ENCODE measurements at regions of chr2 and their contacts with region 1.

Region 1: GRCh38 chr2:145829931-145830330 is 1310.0 kb upstream of the ZEB2 start:
- DNase-seq: no peak
- ATAC-seq: no peak
- H3K4me3 ChIP-seq: no peak overlapping the region
- H3K27ac ChIP-seq: no peak overlapping the region
- H3K4me1 ChIP-seq: no peaks in the 10 kb centered on the region
- H3K27me3 ChIP-seq: no peaks in the 10 kb centered on the region
- CTCF ChIP-seq: no peak
- POLR2A ChIP-seq: no peak
- RAD21 ChIP-seq: no peak

Region 2: DNA sequence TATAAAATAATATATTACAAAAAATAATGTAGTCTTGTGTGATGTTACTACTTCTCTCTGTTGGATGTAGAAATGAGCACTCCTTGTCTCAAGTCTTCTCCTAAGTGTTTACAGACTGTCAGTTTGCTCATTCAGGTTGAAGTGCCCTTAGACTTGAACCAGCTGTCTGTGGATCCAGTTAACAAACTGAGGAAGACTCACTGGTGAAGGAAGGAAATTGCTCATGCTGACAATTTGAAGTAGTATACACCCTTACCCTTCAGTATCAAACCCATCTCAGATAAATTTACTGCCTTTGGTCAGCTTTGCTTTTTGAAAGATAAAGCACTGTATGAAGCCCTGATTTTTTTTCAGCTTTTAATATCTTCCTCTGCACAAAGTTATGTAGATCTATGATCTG is 455.8 kb before region 1 on chr2:
- CTCF ChIA-PET with region 1: no interaction called
- POLR2A ChIA-PET with region 1: no interaction called
- dilution Hi-C with region 1: no loop called
- in situ Hi-C with region 1: no loop called
- intact Hi-C with region 1: no loop called
- DNase-seq: no peak
- ATAC-seq: no peak
- H3K4me3 ChIP-seq: no peak overlapping the region
- H3K27ac ChIP-seq: no peak overlapping the region
- H3K4me1 ChIP-seq: no peaks in the 10 kb centered on the region
- H3K27me3 ChIP-seq: no peaks in the 10 kb centered on the region
- CTCF ChIP-seq: no peak
- POLR2A ChIP-seq: no peak
- RAD21 ChIP-seq: no peak

Region 3: DNA sequence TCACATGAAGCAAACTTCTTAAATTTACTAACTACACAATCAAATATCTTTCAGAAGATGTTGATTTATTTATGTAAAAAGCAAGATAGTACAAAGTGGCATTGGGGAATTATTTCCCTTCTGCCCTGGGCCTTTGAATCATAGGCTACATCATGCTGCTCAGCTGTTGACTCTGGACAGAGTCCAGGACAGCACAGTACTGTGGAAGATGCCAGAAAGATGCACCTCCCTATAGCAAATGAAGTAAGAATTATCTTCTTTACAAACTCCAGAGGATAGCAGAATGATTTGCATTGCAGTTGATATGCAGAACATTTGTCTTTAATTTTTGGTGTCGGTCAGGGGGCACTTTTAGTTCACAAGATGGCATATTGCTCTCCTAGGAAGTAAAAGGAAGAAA is 44.5 kb after region 1 on chr2:
- CTCF ChIA-PET with region 1: no interaction called
- POLR2A ChIA-PET with region 1: no interaction called
- dilution Hi-C with region 1: no loop called
- in situ Hi-C with region 1: no loop called
- intact Hi-C with region 1: loop called (anchors 5 kb)
- DNase-seq: peak; percentile 64
- ATAC-seq: peak; percentile 71
- H3K4me3 ChIP-seq: no peak overlapping the region
- H3K27ac ChIP-seq: no peak overlapping the region
- H3K4me1 ChIP-seq: no peaks in the 10 kb centered on the region
- H3K27me3 ChIP-seq: no peaks in the 10 kb centered on the region
- CTCF ChIP-seq: no peak
- POLR2A ChIP-seq: no peak
- RAD21 ChIP-seq: no peak

Region 4: DNA sequence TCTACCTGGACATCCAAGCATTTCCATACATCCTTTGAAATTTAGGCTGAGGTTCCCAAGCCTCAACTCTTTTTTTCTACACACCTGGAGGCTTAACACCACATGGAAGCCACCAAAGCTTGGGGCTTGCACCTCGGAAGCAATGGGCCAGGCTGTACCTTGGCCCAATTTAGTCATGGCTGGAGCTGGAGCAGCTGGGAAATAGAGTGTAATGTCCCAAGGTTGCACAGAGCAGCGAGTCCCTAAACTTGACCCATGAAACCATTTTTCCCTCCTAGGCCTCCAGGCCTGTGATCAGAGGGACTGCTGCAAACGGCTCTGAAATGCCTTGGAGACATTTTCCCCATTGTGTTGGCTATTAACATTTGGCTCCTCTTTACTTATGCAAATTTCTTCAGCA is 264.3 kb after region 1 on chr2:
- CTCF ChIA-PET with region 1: no interaction called
- POLR2A ChIA-PET with region 1: no interaction called
- dilution Hi-C with region 1: no loop called
- in situ Hi-C with region 1: no loop called
- intact Hi-C with region 1: no loop called
- DNase-seq: no peak
- ATAC-seq: no peak
- H3K4me3 ChIP-seq: no peak overlapping the region
- H3K27ac ChIP-seq: no peak overlapping the region
- H3K4me1 ChIP-seq: no peaks in the 10 kb centered on the region
- H3K27me3 ChIP-seq: no peaks in the 10 kb centered on the region
- CTCF ChIP-seq: no peak
- POLR2A ChIP-seq: no peak
- RAD21 ChIP-seq: no peak

Measured in IMR-90 (cell line).